Right ventricle myocardium superior (tissue), 1 donor: ENCODE measurements at regions of chr20 and their contacts with region 1.

Region 1: GRCh38 chr20:57383447-57384347 is 7.5 kb upstream of the RBM38 start:
- DNase-seq: peak; percentile 24
- ATAC-seq: no peak

Region 2: DNA sequence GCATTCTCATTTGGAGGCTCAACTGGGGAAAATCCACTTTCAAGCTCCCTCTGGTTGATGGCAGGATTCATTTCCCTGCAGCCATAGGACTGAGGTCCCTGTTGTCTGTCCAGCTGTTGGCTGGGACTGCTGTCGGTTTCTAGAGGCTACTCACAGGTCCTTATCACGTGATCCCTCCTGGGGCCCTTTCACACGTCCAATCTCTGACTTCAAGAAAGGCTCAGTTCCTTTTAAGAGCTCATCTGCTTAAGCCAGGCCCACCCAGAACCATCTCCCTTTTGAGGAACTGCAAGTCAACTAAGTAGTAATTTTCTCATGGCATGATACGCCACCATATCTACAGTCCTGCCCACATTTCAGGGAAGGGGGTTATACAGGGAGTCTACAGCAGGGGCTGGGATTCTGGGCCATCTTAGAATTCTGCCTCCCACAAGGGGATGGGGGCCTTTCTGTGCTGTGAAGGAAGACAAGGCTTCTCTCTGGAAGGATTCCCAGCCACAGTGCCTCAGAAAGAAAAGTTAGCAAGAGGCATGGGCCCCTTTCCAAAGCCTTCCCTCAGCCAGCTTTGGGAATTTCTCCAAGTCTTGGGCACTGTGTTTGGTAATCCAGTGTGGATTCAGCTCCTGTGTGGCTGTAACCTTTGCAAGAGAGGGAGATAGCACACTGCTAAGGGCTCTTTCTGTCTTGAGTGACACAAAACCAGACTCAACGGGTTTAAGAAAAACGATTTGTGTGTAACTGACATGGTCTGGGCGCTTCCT is 74.9 kb after region 1 on chr20:
- intact Hi-C with region 1: no loop called
- DNase-seq: no peak
- ATAC-seq: peak; percentile 54

Region 3: GRCh38 chr20:57495985-57496384 is 112.3 kb after region 1 on chr20:
- intact Hi-C with region 1: loop called (anchors 2 kb)
- DNase-seq: no peak
- ATAC-seq: no peak

Region 4: GRCh38 chr20:57748601-57749130 is 365.0 kb after region 1 on chr20:
- intact Hi-C with region 1: no loop called
- DNase-seq: peak; percentile 89
- ATAC-seq: peak; percentile 89